Pancreas (tissue), 10 donors: ENCODE measurements at regions of chr9 and their contacts with region 1.

Region 1: GRCh38 chr9:87375397-87376073 is 122.1 kb upstream of the DAPK1 start:
- DNase-seq: no peak
- ATAC-seq: peak in 2 of 4 donors; percentile 15 to 26
- H3K4me3 ChIP-seq: no peak overlapping the region
- H3K27ac ChIP-seq: no peak overlapping the region
- H3K4me1 ChIP-seq: peaks cover 0 to 1% (median under 1%) of the 10 kb centered on the region in 3 donors
- H3K27me3 ChIP-seq: no peaks in the 10 kb centered on the region
- CTCF ChIP-seq: no peak

Region 2: DNA sequence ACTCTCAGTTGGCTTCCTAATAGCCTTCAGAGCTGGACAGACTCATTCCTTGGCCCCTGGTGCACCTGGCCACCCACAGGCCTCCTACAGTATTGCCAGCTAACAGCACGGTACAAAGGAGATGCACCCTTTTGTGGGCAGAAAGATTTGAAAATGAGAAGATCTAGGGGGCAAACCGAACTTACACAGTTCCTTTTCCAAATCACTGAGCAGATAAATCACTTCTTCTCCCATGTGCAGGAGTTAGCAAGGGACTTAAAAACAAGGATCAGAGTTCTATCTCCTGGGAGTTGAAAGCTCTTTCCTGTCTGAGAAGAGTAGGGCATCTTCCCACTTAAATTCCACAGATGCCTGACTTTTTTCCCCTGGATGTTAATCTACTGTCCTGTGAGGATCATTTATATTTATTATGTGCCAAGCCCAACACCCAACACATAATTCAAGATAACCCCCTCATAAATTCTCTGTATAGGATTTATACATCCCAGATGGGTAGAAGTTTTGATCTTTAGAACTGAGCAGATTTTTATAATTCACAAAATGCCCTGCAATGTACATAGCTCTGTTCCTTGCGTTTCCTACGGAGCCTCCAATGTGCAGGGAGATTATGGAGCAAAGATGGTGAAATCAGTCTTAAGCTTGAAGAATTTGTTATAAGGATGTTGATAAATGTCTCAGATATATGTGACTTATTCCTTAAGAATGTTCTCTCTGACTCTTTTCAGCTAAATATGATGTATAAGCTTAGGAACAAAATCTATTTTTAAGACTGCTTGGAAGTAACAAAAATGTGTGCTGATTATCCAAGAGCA is 85.1 kb before region 1 on chr9:
- intact Hi-C with region 1: no loop called
- DNase-seq: no peak
- ATAC-seq: peak in 1 of 4 donors; percentile 51
- H3K4me3 ChIP-seq: no peak overlapping the region
- H3K27ac ChIP-seq: no peak overlapping the region
- H3K4me1 ChIP-seq: no peaks in the 10 kb centered on the region
- H3K27me3 ChIP-seq: no peaks in the 10 kb centered on the region
- CTCF ChIP-seq: no peak

Region 3: GRCh38 chr9:87436716-87437115 is 61.2 kb after region 1 on chr9:
- intact Hi-C with region 1: loop called in 1 of 3 experiments (anchors 10 kb)
- DNase-seq: no peak
- ATAC-seq: no peak
- H3K4me3 ChIP-seq: no peak overlapping the region
- H3K27ac ChIP-seq: no peak overlapping the region
- H3K4me1 ChIP-seq: no peaks in the 10 kb centered on the region
- H3K27me3 ChIP-seq: no peaks in the 10 kb centered on the region
- CTCF ChIP-seq: no peak

Region 4: GRCh38 chr9:87535817-87536539 is 160.4 kb after region 1 on chr9:
- intact Hi-C with region 1: no loop called
- DNase-seq: no peak
- ATAC-seq: peak in 2 of 4 donors; percentile 48 to 51
- H3K4me3 ChIP-seq: no peak overlapping the region
- H3K27ac ChIP-seq: no peak overlapping the region
- H3K4me1 ChIP-seq: peaks cover 0 to 7% (median 5%) of the 10 kb centered on the region in 3 donors
- H3K27me3 ChIP-seq: no peaks in the 10 kb centered on the region
- CTCF ChIP-seq: no peak